ENCODE measurements at regions of chr5 and their contacts with region 1.

Region 1: DNA sequence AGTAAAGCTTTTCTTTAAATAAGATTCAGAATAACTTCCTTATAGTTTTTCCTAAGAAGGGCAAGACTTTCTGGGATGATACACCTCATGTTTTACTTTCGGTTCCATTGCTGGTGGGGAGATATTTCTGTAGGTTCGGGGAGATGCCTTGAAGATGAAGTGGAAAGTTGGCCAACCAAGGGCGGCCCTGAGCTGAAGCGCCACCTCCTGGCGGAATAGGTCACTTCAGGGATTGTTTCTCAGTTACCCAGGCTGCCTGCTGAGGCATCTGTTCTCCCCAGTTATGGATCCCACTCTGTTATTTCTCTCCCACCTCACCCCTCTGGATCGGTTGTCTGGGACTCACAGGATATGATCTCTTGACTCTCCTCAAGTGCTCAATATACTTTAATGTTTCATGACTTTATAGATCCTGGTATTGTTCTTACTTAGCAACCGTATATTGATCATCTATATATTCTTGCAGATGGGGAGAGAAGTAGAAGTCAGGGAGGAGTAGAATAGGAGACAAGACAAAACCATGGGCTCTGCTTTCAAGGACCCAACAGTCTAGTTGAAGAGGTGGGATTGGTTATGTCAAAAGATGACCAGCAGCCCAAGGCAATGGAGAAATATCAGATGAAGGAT is 23.4 kb downstream of the MEGF10 start:
- DNase-seq: peak; percentile 50
- CTCF ChIP-seq: peak; percentile 86

Region 2: GRCh38 chr5:126656396-126657007 is 657.5 kb before region 1 on chr5:
- in situ Hi-C with region 1: loop called (anchors 25 kb)
- DNase-seq: peak; percentile 59
- CTCF ChIP-seq: peak; percentile 81

Region 3: DNA sequence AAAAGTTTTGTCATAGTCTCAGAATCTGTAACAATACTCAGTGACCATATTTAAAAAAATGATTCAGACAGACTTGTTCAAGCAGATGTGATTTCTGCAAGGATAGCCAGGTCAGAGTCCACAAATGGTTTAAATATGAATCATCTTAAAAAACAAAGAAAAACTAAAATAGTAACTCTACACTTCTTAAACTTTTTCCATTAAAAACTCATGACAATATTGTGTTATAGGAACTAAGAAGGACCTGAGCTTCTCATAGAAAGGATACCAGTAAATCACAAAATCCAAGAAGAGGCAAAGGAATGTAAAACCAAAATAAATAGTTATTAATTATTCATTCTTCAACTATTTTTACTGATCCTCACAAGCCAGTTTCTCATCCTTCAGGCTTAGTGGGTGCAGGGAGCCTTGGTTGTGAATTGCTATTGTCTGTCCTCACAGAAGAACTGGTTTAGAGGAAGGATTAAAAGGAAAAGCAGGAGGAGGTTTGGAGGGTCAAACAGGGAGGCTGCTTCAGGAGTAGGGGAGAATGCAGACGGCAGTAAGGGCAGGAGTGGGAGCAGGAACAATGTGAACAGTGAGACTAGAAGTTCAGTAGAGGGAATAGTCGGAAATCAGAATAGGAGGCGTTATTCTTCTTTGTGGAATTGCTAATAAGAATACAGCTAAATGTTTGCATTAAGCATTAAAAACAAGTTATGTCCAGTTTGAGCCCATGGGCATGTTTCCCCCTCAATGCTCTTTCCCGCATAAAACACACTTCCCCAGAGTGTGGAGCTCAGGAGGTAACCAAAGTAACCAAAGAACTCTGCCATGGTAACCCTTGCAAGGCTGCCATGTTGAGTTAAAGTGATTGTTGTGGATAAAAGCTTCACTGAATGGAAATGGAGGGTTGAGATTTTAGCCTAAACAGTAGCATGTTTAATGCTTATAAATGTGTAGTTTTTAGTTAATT is 499.9 kb after region 1 on chr5:
- in situ Hi-C with region 1: no loop called
- DNase-seq: no peak
- CTCF ChIP-seq: no peak

Measured in GM13976 (cell line).